Posterior vena cava (tissue), 2 donors: ENCODE measurements at regions of chr10 and their contacts with region 1.

Region 1: DNA sequence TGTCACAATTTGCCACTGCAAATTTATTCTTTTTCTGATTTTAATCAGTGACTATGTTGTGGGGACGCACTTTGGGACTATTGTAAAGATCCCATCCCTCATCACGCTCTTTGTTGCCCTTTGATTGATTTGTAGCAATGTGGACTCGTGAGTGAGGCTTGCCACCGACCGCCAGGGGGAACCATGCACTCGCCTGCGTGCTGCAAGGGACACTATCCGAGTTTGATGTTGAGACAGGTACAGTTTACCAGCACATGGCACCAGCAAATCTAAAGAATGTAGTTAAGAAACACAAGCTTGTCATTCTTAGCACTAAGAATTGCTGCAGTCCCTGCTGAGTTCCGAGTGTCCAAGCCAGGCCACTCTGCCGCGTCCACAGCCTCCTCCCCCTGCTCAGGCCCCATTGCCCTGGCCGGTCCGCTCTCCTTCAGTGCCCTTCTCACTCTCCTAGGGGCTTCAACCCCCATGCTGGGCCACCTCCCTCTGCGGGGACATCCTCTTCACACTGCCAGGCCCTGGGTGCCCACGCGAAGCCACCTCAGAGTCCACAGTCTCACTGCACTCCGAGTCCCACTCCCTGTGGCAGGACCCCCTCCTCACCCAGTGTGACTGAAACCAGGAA is 2.0 kb upstream of the SFTPA2 start:
- DNase-seq: peak; percentile 88

Region 2: DNA sequence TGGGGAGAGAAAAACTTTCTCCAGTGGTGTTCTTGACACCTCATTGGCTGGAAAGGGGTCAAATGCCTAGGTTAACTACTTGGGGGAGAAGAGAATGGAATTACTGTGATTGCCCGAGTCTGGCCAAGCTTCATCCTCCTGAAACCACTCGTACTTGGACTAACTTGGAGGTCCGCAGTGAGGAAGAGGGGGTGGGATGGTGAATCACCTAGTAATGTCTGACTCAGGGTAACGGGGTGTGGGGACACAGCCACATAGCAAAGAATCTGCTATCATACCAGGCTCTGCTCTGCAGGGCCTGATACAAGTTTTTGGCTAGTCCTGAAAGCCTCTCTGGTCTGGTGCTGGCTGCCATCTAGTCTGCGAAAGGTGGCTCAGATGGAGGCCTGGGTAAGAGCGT is 1337.6 kb before region 1 on chr10:
- intact Hi-C with region 1: no loop called
- DNase-seq: no peak

Region 3: GRCh38 chr10:80670763-80671162 is 1108.5 kb after region 1 on chr10:
- intact Hi-C with region 1: loop called in 1 of 2 experiments (anchors 5 kb)
- DNase-seq: no peak